HAP-1 (cell line): ENCODE measurements at regions of chr6 and their contacts with region 1.

Region 1: GRCh38 chr6:37029249-37029971 is 24.0 kb downstream of the FGD2 start:
- DNase-seq: peak; percentile 51 to 79
- H3K4me3 ChIP-seq: no peak overlapping the region
- H3K4me1 ChIP-seq: no peaks in the 10 kb centered on the region
- H3K27me3 ChIP-seq: no peaks in the 10 kb centered on the region

Region 2: GRCh38 chr6:37169496-37170272 is 140.3 kb after region 1 on chr6 and contains the start of gene PIM1:
- in situ Hi-C with region 1: loop called (anchors 10 kb)
- DNase-seq: peak; percentile 94 to 100
- H3K4me3 ChIP-seq: peak within 1 kb of the TSS; percentile 95
- H3K4me1 ChIP-seq: peaks cover 16% of the 10 kb centered on the region
- H3K27me3 ChIP-seq: no peaks in the 10 kb centered on the region

Region 3: GRCh38 chr6:37207903-37208456 is 178.6 kb after region 1 on chr6:
- in situ Hi-C with region 1: loop called (anchors 10 kb)
- DNase-seq: peak; percentile 70 to 92
- H3K4me3 ChIP-seq: no peak overlapping the region
- H3K4me1 ChIP-seq: no peaks in the 10 kb centered on the region
- H3K27me3 ChIP-seq: no peaks in the 10 kb centered on the region